Adrenal gland (tissue), 19 donors: ENCODE measurements at regions of chr16 and their contacts with region 1.

Region 1: GRCh38 chr16:55701442-55702319 is 45.9 kb downstream of the SLC6A2 start:
- DNase-seq: peak; percentile 45 to 80 (median 64)
- H3K4me3 ChIP-seq: no peak overlapping the region
- H3K27ac ChIP-seq: no peak overlapping the region
- H3K4me1 ChIP-seq: no peaks in the 10 kb centered on the region
- H3K27me3 ChIP-seq: no peaks in the 10 kb centered on the region
- CTCF ChIP-seq: peak; percentile 28 to 74 (median 57)
- POLR2A ChIP-seq: no peak

Region 2: GRCh38 chr16:55543472-55543871 is 158.2 kb before region 1 on chr16:
- intact Hi-C with region 1: loop called in 1 of 2 experiments (anchors 5 kb)
- DNase-seq: no peak
- H3K4me3 ChIP-seq: no peak overlapping the region
- H3K27ac ChIP-seq: no peak overlapping the region
- H3K4me1 ChIP-seq: peaks cover 0 to 11% of the 10 kb centered on the region in 2 donors
- H3K27me3 ChIP-seq: no peaks in the 10 kb centered on the region
- CTCF ChIP-seq: peak in 5 of 6 experiments; percentile 46 to 72 (median 59)
- POLR2A ChIP-seq: no peak

Region 3: DNA sequence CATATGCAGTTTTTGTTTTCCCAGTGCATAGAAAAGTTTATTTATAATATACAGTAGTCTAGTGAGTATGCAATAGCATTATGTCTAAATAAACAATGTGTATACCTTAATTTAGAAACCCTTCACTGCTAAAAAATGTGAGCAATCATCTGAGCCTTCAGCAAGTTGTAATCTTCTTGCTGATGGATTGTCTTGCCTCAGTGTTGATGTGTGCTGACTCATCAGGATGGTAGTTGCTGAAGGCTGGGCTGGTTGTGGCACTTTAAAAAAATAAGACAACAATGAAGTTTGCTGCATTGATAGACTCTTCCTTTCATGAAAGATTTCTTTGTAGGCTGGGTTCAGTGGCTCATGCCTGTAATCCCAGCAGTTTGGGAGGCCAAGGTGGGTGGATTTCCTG is 149.1 kb before region 1 on chr16:
- intact Hi-C with region 1: loop called (anchors 5 to 10 kb)
- DNase-seq: no peak
- H3K4me3 ChIP-seq: no peak overlapping the region
- H3K27ac ChIP-seq: no peak overlapping the region
- H3K4me1 ChIP-seq: no peaks in the 10 kb centered on the region
- H3K27me3 ChIP-seq: no peaks in the 10 kb centered on the region
- CTCF ChIP-seq: no peak
- POLR2A ChIP-seq: no peak

Region 4: GRCh38 chr16:55746081-55746480 is 44.4 kb after region 1 on chr16:
- intact Hi-C with region 1: no loop called
- DNase-seq: peak in 1 of 7 donors; percentile 3
- H3K4me3 ChIP-seq: no peak overlapping the region
- H3K27ac ChIP-seq: no peak overlapping the region
- H3K4me1 ChIP-seq: no peaks in the 10 kb centered on the region
- H3K27me3 ChIP-seq: no peaks in the 10 kb centered on the region
- CTCF ChIP-seq: no peak
- POLR2A ChIP-seq: no peak

Region 5: GRCh38 chr16:55817236-55817912 is 115.7 kb after region 1 on chr16:
- intact Hi-C with region 1: no loop called
- DNase-seq: peak in 1 of 7 donors; percentile 10
- H3K4me3 ChIP-seq: no peak overlapping the region
- H3K27ac ChIP-seq: no peak overlapping the region
- H3K4me1 ChIP-seq: no peaks in the 10 kb centered on the region
- H3K27me3 ChIP-seq: no peaks in the 10 kb centered on the region
- CTCF ChIP-seq: no peak
- POLR2A ChIP-seq: no peak